Breast epithelium (tissue), 4 donors: ENCODE measurements at regions of chr10 and their contacts with region 1.

Region 1: DNA sequence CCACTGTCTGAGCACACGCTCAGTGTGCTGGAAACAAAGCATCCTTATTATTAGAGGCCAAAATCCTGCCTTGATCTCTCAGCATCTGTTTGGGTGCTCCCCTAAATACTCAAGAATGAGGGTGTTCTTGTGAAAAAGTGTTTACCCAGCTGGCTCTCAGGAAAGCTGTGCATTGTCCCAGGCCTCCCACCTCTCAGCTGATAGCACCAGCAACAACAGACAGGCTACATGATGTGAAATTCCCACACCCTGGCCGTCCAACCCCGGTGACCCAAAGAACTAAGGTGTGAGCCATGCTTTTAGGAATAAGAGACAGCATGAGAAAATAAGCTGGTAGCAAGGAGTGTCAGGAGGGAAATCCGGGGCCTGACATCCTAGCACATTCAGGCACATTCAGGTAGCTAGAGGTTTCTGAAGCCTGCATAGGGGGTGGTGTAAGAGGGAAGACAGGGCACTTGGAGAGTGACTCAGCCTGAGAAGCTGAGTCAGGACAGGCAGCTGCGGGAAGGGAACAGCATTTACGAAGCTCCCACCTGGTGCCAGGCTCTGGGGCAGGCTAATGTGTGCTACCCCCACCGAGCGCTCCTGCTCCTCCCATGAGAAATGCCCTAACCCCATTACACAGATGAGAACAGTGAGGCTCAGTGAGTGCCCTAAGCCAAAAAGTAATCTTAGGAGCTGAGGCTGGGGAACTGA is 205.6 kb downstream of the GRID1 start:
- DNase-seq: no peak
- H3K4me3 ChIP-seq: no peak overlapping the region
- H3K27ac ChIP-seq: no peak overlapping the region
- H3K4me1 ChIP-seq: no peaks in the 10 kb centered on the region
- H3K27me3 ChIP-seq: no peaks in the 10 kb centered on the region
- CTCF ChIP-seq: no peak
- POLR2A ChIP-seq: no peak

Region 2: DNA sequence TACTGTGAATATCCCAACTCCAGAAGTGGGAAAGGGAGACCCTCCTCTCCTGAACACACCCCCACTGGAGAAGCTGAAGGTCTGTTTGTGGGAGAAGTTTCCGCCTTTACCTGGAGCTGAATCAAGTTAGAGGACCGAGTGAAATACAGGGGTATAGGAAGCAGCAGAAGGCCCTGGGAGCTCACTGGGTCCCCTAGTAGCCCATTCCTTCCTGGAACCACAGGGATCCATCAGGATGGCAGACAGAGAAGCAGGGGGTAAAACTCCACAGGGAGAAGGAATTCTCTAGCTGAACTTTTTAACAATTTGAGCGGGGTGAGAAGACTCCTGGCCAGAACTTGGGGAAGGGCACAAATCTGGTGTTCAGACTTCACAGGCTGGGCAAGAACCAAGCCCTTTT is 70.2 kb before region 1 on chr10:
- intact Hi-C with region 1: loop called (anchors 2 kb)
- DNase-seq: no peak
- H3K4me3 ChIP-seq: no peak overlapping the region
- H3K27ac ChIP-seq: no peak overlapping the region
- H3K4me1 ChIP-seq: no peaks in the 10 kb centered on the region
- H3K27me3 ChIP-seq: no peaks in the 10 kb centered on the region
- CTCF ChIP-seq: no peak
- POLR2A ChIP-seq: no peak